MCF 10A (cell line): ENCODE measurements at regions of chr17 and their contacts with region 1.

Region 1: DNA sequence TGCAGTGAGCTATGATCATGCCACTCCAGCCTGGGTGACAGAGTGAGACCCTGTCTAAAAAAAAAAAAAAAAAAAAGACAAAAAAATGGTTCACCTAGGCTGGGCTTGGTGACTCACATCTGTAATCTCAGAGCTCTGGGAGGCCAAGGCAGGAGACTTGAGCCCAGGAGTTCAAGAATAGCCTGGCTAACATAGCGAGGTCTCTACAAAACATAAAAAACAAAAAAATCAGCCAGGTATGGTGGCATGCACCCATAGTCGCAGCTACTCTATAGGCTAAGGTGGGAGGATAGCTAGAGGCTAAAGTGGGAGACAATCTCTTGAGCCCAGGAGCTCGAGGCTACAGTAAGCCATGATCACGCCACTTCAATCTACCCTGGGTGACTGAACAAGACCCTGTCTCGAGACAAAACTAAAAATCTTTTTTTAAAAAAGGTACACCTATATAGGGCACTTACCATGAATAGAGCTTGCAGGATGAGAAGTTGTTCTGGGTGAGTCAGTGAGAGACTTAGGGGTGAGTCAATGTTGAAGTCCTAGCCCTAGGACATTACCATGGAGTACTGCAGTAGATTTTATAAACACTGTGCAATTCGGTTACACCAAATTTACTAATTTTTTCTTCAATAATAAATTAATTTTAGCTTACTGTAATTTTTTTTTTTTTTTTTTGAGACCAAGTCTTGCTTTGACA is 19.0 kb downstream of the USP32 start:
- DNase-seq: peak; percentile 77
- H3K4me3 Mint-ChIP-seq: peak overlapping the region; percentile 44
- H3K27ac Mint-ChIP-seq: peak overlapping the region; percentile 88
- H3K4me1 Mint-ChIP-seq: peaks cover 15% of the 10 kb centered on the region
- H3K27me3 Mint-ChIP-seq: no peaks in the 10 kb centered on the region
- CTCF ChIP-seq: no peak

Region 2: DNA sequence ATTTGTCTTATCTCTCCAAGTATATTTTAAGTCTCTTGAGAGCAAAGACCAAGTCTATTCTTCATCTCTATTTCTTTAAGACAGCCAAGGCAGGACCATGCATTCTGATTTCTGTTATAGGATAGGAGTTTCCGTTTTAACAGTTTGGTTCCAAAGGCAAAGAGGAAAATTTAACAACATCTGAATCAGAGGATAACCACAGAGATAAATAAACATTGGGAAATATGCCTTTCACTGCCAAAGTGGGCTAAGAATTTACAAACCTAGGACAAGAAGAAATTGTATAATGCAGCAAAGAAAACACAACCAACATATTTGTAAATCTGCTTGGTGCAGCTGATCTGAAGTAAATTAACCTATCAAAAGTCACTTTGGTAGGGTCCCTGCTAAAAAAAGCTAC is 18.7 kb before region 1 on chr17:
- CTCF ChIA-PET with region 1: interaction called, 3 read pairs
- POLR2A ChIA-PET with region 1: interaction called, 89 read pairs
- intact Hi-C with region 1: no loop called
- DNase-seq: peak; percentile 83
- H3K4me3 Mint-ChIP-seq: peak overlapping the region; percentile 5
- H3K27ac Mint-ChIP-seq: peak overlapping the region; percentile 46
- H3K4me1 Mint-ChIP-seq: peaks cover 33% of the 10 kb centered on the region
- H3K27me3 Mint-ChIP-seq: no peaks in the 10 kb centered on the region
- CTCF ChIP-seq: no peak